Activated T-helper 1 cell treated with anti-CD3 and anti-CD28 coated beads, Interleukin-12 subunit alpha, Interleukin-12 subunit beta, Interleukin-2, Interleukin-4 antibody, amounts not matched to agents 30 ng/mL and 10 ng/mL and 1 ng/mL, durations not matched to agents 14 hours and 24 hours and 36 hours (primary cell): ENCODE measurements at regions of chr11 and their contacts with region 1.

Region 1: GRCh38 chr11:87081358-87081757 is 43.6 kb downstream of the TMEM135 start:
- DNase-seq: no peak
- H3K4me3 Mint-ChIP-seq: peak overlapping the region; percentile 78
- H3K27ac Mint-ChIP-seq: peak overlapping the region; percentile 87
- H3K4me1 Mint-ChIP-seq: peaks cover 32% of the 10 kb centered on the region
- H3K27me3 Mint-ChIP-seq: no peaks in the 10 kb centered on the region

Region 2: DNA sequence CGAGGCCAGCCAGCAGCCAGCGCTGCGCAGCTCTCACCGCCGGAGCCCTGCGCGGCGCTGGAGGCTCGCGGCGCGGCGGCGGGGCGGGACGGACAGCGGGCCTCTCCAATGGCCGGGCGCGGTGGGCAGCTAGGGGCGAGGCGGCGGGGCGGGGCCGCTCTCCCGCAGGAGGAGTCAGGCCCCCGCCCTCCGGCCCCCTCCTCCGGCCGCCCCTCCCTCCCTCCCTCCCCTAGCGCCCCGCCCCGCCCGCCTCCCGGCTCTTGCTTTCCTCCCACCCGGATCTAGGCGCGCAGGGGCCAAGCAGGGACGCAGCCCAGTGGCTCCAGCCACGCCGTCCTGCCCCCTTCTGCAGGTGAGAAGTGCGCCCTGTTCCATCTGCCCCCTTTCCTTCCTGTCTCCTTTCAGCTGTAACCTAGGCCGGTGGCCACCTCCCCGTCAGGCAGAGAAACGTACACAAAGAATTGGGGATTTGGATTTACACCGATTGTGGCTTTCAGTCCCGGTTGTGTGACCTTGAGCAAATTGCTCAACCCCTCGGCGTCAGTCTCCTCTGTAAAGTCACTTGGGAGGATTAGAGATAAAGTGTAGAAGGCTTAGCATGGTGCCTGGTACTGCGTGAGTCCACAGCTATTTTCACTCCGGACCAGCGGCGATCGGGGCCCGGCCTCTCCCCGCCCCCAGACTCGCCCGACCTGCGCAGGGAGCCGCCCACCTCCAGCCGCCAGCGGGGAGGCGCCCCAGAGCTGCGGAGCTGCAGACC is 125.8 kb before region 1 on chr11 and contains the start of gene FZD4:
- intact Hi-C with region 1: loop called (anchors 5 kb)
- DNase-seq: peak; percentile 51
- H3K4me3 Mint-ChIP-seq: peak within 1 kb of the TSS; percentile 95
- H3K27ac Mint-ChIP-seq: no peak within 1 kb of the TSS
- H3K4me1 Mint-ChIP-seq: peaks cover 8% of the 10 kb centered on the region
- H3K27me3 Mint-ChIP-seq: peaks cover 59% of the 10 kb centered on the region
- total RNA-seq, gene FZD4: 0.05 TPM in 1 of 2 replicates, not detected in the other

Region 3: DNA sequence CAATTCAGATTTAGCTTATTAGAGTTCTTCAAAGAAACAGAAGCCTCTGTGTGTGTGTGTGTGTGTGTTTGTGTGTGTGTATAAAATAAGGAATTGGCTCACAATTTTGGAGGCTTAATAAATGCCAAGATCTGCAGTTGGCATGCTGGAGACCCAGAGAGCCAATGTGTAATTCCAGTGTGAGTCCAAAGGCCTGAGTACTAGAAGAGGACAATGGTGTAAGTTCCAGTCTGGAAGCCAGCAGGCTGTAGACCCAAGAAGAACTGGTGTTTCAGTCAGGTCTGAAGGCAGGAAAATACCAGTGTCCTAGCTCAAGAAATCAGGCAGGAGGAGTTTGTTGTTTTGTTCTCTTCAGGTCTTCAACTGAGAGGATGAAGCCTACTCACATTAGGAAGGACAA is 23.6 kb before region 1 on chr11:
- intact Hi-C with region 1: no loop called
- DNase-seq: no peak
- H3K4me3 Mint-ChIP-seq: no peak overlapping the region
- H3K27ac Mint-ChIP-seq: no peak overlapping the region
- H3K4me1 Mint-ChIP-seq: peaks cover 5% of the 10 kb centered on the region
- H3K27me3 Mint-ChIP-seq: no peaks in the 10 kb centered on the region

Region 4: GRCh38 chr11:87213444-87213843 is 132.1 kb after region 1 on chr11:
- intact Hi-C with region 1: loop called (anchors 5 kb)
- DNase-seq: no peak
- H3K4me3 Mint-ChIP-seq: no peak overlapping the region
- H3K27ac Mint-ChIP-seq: no peak overlapping the region
- H3K4me1 Mint-ChIP-seq: peaks cover 10% of the 10 kb centered on the region
- H3K27me3 Mint-ChIP-seq: no peaks in the 10 kb centered on the region

Region 5: GRCh38 chr11:87252869-87253268 is 171.5 kb after region 1 on chr11:
- intact Hi-C with region 1: loop called (anchors 5 kb)
- DNase-seq: no peak
- H3K4me3 Mint-ChIP-seq: no peak overlapping the region
- H3K27ac Mint-ChIP-seq: peak overlapping the region; percentile 72
- H3K4me1 Mint-ChIP-seq: peaks cover 15% of the 10 kb centered on the region
- H3K27me3 Mint-ChIP-seq: no peaks in the 10 kb centered on the region